PC-3 (cell line): ENCODE measurements at regions of chr3 and their contacts with region 1.

Region 1: DNA sequence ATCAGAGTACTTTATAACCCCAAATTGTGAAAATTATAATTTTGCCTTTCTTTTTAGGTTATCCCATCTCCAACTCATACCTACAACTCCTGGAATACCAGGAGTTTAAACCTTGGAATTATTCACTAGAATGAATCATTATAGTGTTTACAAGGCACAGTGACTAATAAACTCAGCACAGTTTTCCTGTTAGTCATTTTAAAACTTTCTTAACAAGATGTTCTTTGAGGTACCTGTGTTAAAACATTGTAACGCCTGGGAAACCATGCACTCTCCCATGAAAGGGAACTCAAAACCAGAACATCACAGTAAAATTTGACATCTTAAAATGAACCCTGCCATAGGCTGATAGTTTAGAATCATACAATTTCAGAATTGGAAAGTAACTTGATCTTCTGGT is 132.4 kb upstream of the OSTN start:
- DNase-seq: peak; percentile 92
- ATAC-seq: peak; percentile 67
- H3K4me3 ChIP-seq: peak overlapping the region; percentile 25; the same call in 1 of the 2 replicates
- H3K27ac ChIP-seq: peak overlapping the region; percentile 95
- H3K4me1 ChIP-seq: peaks cover 69% of the 10 kb centered on the region
- H3K27me3 ChIP-seq: no peaks in the 10 kb centered on the region
- CTCF ChIP-seq: no peak

Region 2: DNA sequence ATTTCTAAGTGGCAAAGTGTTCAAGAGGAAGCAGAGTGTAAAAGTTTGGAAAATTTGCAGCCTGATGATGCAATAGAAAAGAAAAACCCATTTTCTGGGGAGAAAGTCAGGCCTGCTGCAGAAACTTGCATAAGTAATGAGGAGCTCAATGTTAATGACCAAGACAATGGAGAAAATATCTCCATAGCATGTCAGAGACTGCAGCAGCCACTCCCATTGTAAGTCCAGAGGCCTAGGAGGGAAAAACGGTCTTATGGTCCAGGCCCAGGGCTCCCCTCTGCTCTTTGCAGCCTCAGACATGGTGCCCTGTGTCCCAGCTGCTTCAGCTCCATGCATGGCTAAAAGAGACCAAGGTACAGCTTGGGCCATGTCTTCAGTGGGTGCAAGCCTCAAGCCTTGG is 107.6 kb before region 1 on chr3:
- CTCF ChIA-PET with region 1: no interaction called
- POLR2A ChIA-PET with region 1: no interaction called
- intact Hi-C with region 1: no loop called
- DNase-seq: no peak
- ATAC-seq: no peak
- H3K4me3 ChIP-seq: no peak overlapping the region
- H3K27ac ChIP-seq: no peak overlapping the region
- H3K4me1 ChIP-seq: no peaks in the 10 kb centered on the region
- H3K27me3 ChIP-seq: no peaks in the 10 kb centered on the region
- CTCF ChIP-seq: no peak

Region 3: GRCh38 chr3:191094057-191094845 is 27.6 kb after region 1 on chr3:
- CTCF ChIA-PET with region 1: no interaction called
- POLR2A ChIA-PET with region 1: interaction called, 7 read pairs
- intact Hi-C with region 1: loop called (anchors 2 kb)
- DNase-seq: peak; percentile 90
- ATAC-seq: peak; percentile 97
- H3K4me3 ChIP-seq: no peak overlapping the region
- H3K27ac ChIP-seq: no peak overlapping the region
- H3K4me1 ChIP-seq: peaks cover 14% of the 10 kb centered on the region
- H3K27me3 ChIP-seq: no peaks in the 10 kb centered on the region
- CTCF ChIP-seq: no peak